ENCODE measurements at regions of chr6 and their contacts with region 1.

Region 1: GRCh38 chr6:37339741-37340638 is 13.8 kb upstream of the RNF8 start:
- DNase-seq: peak in 1 of 4 donors; percentile 33
- ATAC-seq: no peak
- H3K4me3 ChIP-seq: no peak overlapping the region
- H3K27ac ChIP-seq: no peak overlapping the region
- H3K4me1 ChIP-seq: no peaks in the 10 kb centered on the region
- H3K27me3 ChIP-seq: no peaks in the 10 kb centered on the region
- CTCF ChIP-seq: no peak

Region 2: GRCh38 chr6:37691904-37692806 is 352.2 kb after region 1 on chr6:
- intact Hi-C with region 1: loop called in 1 of 2 experiments (anchors 10 kb)
- DNase-seq: peak in 3 of 4 donors; percentile 54 to 91 (median 64)
- ATAC-seq: peak; percentile 88
- H3K4me3 ChIP-seq: no peak overlapping the region
- H3K27ac ChIP-seq: no peak overlapping the region
- H3K4me1 ChIP-seq: peaks cover 10 to 19% of the 10 kb centered on the region in 2 donors
- H3K27me3 ChIP-seq: peaks cover 19 to 73% of the 10 kb centered on the region in 2 donors
- CTCF ChIP-seq: peak; percentile 96 to 98

Measured in left lung (tissue), 14 donors.